ENCODE measurements at regions of chr2 and their contacts with region 1.

Region 1: DNA sequence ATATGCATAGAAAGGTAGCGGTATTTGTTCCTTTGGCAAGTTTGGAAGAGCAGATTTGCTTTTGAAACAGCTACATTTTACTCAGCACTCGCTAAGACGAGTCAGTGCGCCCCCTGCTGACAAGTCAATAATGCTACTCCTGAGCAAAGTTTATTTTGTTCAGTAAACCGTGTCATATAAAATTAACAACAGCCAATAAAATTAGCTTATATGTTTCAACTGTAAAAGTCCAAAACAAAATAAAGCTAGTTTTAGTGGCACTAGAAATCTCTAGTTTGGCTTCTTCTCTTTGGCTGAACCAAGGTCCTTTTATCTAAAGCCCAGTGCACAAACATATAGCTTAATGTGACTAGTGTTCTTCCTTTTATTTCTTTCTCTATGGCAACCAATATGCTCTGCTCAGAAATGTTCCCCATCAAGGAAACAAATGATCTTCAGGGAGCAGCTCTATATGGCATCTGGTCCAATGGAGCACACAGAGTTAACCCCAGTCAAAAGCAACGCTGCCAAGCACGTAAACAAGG is 4.2 kb upstream of the POU3F3 start:
- DNase-seq: peak; percentile 79
- ATAC-seq: no peak
- H3K4me3 Mint-ChIP-seq: no peak overlapping the region
- H3K27ac Mint-ChIP-seq: no peak overlapping the region
- H3K4me1 Mint-ChIP-seq: peaks cover 81% of the 10 kb centered on the region
- H3K27me3 Mint-ChIP-seq: peaks cover 97% of the 10 kb centered on the region
- CTCF ChIP-seq: peak; percentile 84

Region 2: GRCh38 chr2:104749856-104750460 is 99.7 kb before region 1 on chr2:
- CTCF ChIA-PET with region 1: interaction called, 10 read pairs
- POLR2A ChIA-PET with region 1: interaction called, 4 read pairs
- DNase-seq: no peak
- ATAC-seq: no peak
- H3K4me3 Mint-ChIP-seq: no peak overlapping the region
- H3K27ac Mint-ChIP-seq: no peak overlapping the region
- H3K4me1 Mint-ChIP-seq: peaks cover 21% of the 10 kb centered on the region
- H3K27me3 Mint-ChIP-seq: 0 out of 2 replicates have a peak, but pooled peaks cover 4% of the 10 kb centered on the region
- CTCF ChIP-seq: no peak

Region 3: GRCh38 chr2:104862058-104862941 is 12.6 kb after region 1 on chr2:
- CTCF ChIA-PET with region 1: interaction called, 40 read pairs
- POLR2A ChIA-PET with region 1: interaction called, 5 read pairs
- DNase-seq: peak; percentile 78
- ATAC-seq: peak; percentile 55
- H3K4me3 Mint-ChIP-seq: peak overlapping the region; percentile 82
- H3K27ac Mint-ChIP-seq: peak overlapping the region; percentile 28
- H3K4me1 Mint-ChIP-seq: peaks cover 58% of the 10 kb centered on the region
- H3K27me3 Mint-ChIP-seq: peaks cover 99% of the 10 kb centered on the region
- CTCF ChIP-seq: no peak

Region 4: GRCh38 chr2:104872866-104873688 is 23.4 kb after region 1 on chr2:
- CTCF ChIA-PET with region 1: interaction called, 59 read pairs
- POLR2A ChIA-PET with region 1: interaction called, 5 read pairs
- DNase-seq: peak; percentile 71
- ATAC-seq: peak; percentile 73
- H3K4me3 Mint-ChIP-seq: peak overlapping the region; percentile 79
- H3K27ac Mint-ChIP-seq: no peak overlapping the region
- H3K4me1 Mint-ChIP-seq: peaks cover 31% of the 10 kb centered on the region
- H3K27me3 Mint-ChIP-seq: peaks cover 96% of the 10 kb centered on the region
- CTCF ChIP-seq: peak; percentile 37; the same call in 1 of the 2 replicates

Region 5: GRCh38 chr2:105102963-105103421 is 253.3 kb after region 1 on chr2:
- CTCF ChIA-PET with region 1: no interaction called
- POLR2A ChIA-PET with region 1: no interaction called
- DNase-seq: peak; percentile 83
- ATAC-seq: peak; percentile 97
- H3K4me3 Mint-ChIP-seq: peak overlapping the region; percentile 70
- H3K27ac Mint-ChIP-seq: peak overlapping the region; percentile 99
- H3K4me1 Mint-ChIP-seq: peaks cover 33% of the 10 kb centered on the region
- H3K27me3 Mint-ChIP-seq: no peaks in the 10 kb centered on the region; the same call in 1 of the 2 replicates
- CTCF ChIP-seq: no peak

Measured in WTC11 (cell line).